ENCODE measurements at regions of chr19 and their contacts with region 1.

Region 1: DNA sequence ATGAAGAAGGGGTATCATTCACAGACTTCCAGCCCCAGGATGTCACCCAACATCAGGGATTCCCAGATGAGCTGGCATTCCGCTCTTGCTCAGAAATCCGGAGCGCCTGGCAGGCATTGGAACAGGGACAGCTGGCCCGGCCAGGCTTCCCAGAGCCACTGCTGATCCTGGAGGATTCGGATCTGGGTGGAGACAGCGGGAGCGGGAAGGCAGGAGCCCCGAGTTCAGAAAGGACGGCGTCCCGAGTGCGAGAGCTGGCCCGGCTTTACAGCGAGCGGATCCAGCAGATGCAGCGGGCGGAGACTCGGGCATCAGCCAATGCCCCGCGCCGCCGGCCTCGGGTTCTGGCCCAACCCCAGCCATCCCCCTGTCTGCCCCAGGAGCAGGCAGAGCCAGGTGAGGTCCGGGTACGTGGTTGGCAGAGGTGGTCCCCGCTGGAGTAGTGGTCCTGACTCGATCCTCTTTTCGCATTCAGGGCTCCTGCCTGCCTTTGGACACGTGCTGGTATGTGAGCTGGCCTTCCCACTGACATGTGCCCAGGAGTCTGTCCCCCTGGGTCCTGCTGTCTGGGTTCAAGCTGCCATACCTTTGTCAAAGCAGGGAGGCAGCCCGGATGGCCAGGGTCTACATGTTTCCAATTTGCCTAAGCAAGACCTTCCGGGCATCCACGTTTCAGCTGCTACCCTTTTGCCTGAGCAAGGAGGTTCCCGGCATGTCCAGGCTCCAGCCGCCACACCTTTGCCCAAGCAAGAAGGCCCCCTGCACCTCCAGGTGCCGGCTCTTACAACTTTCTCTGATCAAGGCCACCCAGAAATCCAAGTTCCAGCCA is 11.0 kb downstream of the PLEKHG2 start:
- DNase-seq: no peak
- ATAC-seq: no peak
- H3K4me3 ChIP-seq: no peak overlapping the region
- H3K27ac ChIP-seq: peak overlapping the region; percentile 3
- H3K4me1 ChIP-seq: peaks cover 24% of the 10 kb centered on the region
- H3K27me3 ChIP-seq: no peaks in the 10 kb centered on the region
- CTCF ChIP-seq: no peak

Region 2: DNA sequence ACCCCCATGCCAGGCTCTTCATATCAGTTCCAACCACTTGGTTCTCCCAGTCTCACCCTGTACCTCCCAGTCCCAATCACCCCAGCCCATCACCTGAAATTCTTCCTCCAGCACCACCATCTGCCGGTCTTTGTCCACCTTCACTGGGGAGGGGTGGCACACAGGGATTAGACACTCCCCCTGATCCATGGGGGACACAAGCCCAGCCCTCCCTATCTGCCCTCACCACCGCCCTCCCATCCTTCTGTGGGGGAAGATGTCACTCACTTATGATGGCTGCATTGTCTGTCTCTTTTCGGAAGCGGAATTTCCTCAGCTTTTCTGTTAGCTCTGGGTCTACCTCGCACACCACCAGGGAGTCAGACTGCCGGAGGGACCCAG is 88.3 kb before region 1 on chr19:
- CTCF ChIA-PET with region 1: no interaction called
- POLR2A ChIA-PET with region 1: no interaction called
- in situ Hi-C with region 1: no loop called
- intact Hi-C with region 1: no loop called
- DNase-seq: no peak
- ATAC-seq: peak; percentile 6
- H3K4me3 ChIP-seq: no peak overlapping the region
- H3K27ac ChIP-seq: no peak overlapping the region
- H3K4me1 ChIP-seq: peaks cover 4% of the 10 kb centered on the region; the same call in 1 of the 2 replicates
- H3K27me3 ChIP-seq: no peaks in the 10 kb centered on the region
- CTCF ChIP-seq: no peak

Region 3: GRCh38 chr19:39406656-39407393 is 16.6 kb before region 1 on chr19 and contains the start of gene ZFP36:
- CTCF ChIA-PET with region 1: interaction called, 147 read pairs
- POLR2A ChIA-PET with region 1: interaction called, 142 read pairs
- in situ Hi-C with region 1: no loop called
- intact Hi-C with region 1: no loop called
- DNase-seq: peak; percentile 100
- ATAC-seq: peak; percentile 37
- H3K4me3 ChIP-seq: peak within 1 kb of the TSS; percentile 42 to 55
- H3K27ac ChIP-seq: peak within 1 kb of the TSS; percentile 92
- H3K4me1 ChIP-seq: peaks cover 76% of the 10 kb centered on the region
- H3K27me3 ChIP-seq: no peaks in the 10 kb centered on the region
- CTCF ChIP-seq: no peak
- total RNA-seq, gene ZFP36: 414 TPM

Region 4: GRCh38 chr19:39480337-39481228 is 57.1 kb after region 1 on chr19 and contains the start of gene TIMM50:
- CTCF ChIA-PET with region 1: interaction called, 5 read pairs
- POLR2A ChIA-PET with region 1: interaction called, 12 read pairs
- in situ Hi-C with region 1: no loop called
- intact Hi-C with region 1: no loop called
- DNase-seq: peak; percentile 100
- ATAC-seq: peak; percentile 96
- H3K4me3 ChIP-seq: peak within 1 kb of the TSS; percentile 39 to 55
- H3K27ac ChIP-seq: peak within 1 kb of the TSS; percentile 86
- H3K4me1 ChIP-seq: peaks cover 23% of the 10 kb centered on the region
- H3K27me3 ChIP-seq: no peaks in the 10 kb centered on the region
- CTCF ChIP-seq: no peak
- total RNA-seq, gene TIMM50: 1,837 TPM

Measured in Panc1 (cell line).